ENCODE measurements at regions of chr19 and their contacts with region 1.

Region 1: DNA sequence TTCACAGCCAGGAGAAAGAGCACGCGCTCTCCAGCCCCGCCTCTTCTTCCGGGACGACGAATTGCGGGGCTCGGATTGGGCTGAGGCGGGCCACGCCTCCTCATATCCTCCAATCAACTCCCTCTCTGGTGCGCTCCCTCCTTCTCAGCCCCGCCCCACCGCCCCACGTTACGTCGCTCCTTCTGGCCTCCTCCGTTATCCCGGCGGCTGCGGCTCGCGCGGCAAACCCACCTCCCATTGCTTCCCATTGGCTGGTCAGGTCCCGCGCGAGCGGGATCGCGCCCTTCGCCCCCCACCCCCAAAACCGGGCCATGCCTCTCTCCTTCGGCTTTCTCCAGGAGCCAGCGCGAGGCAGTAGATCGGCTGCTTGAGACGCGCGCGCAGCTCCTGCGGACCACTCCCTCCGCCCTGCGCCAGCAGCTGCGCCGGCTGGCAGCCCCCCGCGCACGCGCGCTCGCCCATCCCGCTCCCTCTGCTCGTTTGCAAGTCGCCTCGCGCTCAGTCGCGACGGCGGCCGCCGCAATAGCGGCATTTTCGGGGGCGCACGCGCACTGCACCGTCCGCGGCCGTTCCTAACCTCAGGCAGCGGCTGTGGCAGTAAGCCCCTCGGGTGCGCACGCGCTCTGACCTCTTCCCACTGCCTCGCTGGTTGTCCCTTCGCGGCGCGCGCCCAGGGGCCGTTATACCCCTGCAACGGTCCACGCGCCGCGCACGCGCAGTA is 512 bp upstream of the ARHGAP35 start:
- DNase-seq: peak; percentile 97
- H3K4me3 Mint-ChIP-seq: peak overlapping the region; percentile 92
- H3K27ac Mint-ChIP-seq: peak overlapping the region; percentile 97
- H3K4me1 Mint-ChIP-seq: peaks cover 25% of the 10 kb centered on the region
- H3K27me3 Mint-ChIP-seq: no peaks in the 10 kb centered on the region

Region 2: GRCh38 chr19:46392243-46392801 is 468.0 kb before region 1 on chr19:
- intact Hi-C with region 1: loop called (anchors 1 kb)
- DNase-seq: no peak
- H3K4me3 Mint-ChIP-seq: no peak overlapping the region
- H3K27ac Mint-ChIP-seq: no peak overlapping the region
- H3K4me1 Mint-ChIP-seq: peaks cover 10% of the 10 kb centered on the region
- H3K27me3 Mint-ChIP-seq: no peaks in the 10 kb centered on the region

Region 3: GRCh38 chr19:46919324-46919723 is 59.0 kb after region 1 on chr19:
- intact Hi-C with region 1: loop called (anchors 2 kb)
- DNase-seq: no peak
- H3K4me3 Mint-ChIP-seq: no peak overlapping the region
- H3K27ac Mint-ChIP-seq: no peak overlapping the region
- H3K4me1 Mint-ChIP-seq: peaks cover 37% of the 10 kb centered on the region
- H3K27me3 Mint-ChIP-seq: no peaks in the 10 kb centered on the region

Region 4: DNA sequence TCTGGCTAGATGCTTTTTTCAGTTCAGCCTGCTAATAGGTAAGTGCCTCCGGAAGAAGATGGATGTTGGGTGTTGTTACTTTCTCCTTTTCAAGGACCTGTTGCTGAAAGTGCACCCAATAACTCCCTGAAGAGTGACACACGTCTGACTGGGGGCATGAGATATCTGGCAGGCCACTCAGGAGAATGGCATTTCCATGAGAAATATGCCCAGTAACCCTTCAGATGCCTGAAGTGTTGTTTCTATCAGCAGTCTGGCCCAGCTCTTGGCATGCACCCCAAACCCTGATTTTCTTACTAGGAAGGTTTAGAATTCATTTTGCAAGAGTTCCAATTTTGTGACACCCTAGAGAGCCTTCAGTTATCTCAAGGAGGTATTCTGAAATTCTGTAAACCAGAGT is 72.1 kb after region 1 on chr19:
- intact Hi-C with region 1: no loop called
- DNase-seq: no peak
- H3K4me3 Mint-ChIP-seq: no peak overlapping the region
- H3K27ac Mint-ChIP-seq: no peak overlapping the region
- H3K4me1 Mint-ChIP-seq: peaks cover 41% of the 10 kb centered on the region
- H3K27me3 Mint-ChIP-seq: no peaks in the 10 kb centered on the region

Region 5: GRCh38 chr19:46990991-46991676 is 130.8 kb after region 1 on chr19:
- intact Hi-C with region 1: loop called (anchors 1 kb)
- DNase-seq: peak; percentile 51
- H3K4me3 Mint-ChIP-seq: no peak overlapping the region
- H3K27ac Mint-ChIP-seq: no peak overlapping the region
- H3K4me1 Mint-ChIP-seq: peaks cover 19% of the 10 kb centered on the region
- H3K27me3 Mint-ChIP-seq: no peaks in the 10 kb centered on the region

Region 6: DNA sequence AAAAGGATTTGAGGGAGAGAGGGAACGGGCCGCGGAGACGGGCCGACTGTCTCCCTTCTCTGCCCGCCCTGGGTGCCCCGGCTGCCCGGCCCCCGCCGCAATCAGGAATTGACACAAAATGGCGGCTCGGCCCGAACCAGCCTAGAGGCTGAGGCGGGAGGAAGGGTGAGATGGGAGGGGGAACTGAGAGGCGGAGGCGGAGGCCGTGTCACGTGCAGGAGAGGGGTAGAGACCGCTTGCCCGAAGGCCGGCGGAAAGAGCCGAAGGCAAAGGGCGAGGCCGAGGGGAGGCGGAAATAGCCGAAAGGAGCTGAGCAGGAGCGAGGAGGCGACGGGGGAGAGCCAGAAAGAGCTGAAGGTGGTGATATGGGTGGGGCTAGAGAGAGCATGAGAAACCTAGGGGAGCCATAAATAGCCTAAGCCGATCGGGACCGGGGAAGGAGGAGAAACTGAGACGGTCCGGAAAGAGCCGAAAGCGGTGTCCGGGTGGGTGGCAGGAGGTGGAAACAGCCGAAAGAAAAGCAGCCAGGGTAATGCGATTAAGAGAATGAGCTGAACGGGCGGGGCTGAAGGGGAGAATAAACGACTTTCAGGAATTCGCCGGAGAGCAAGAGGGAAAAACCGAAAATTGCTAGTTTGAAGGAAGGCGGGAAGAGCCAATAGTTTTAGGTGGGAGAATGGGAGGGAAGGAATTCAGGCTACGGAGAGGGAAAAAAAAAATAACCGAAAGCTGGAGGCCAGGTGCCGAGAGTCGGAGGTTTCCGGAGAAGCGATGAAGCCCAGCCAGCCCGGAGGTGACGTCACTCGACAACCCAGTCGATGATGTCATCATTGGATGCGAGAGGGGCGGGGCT is 252.9 kb after region 1 on chr19 and contains the start of gene ZC3H4:
- intact Hi-C with region 1: loop called (anchors 2 kb)
- DNase-seq: peak; percentile 100
- H3K4me3 Mint-ChIP-seq: peak within 1 kb of the TSS; percentile 92
- H3K27ac Mint-ChIP-seq: peak within 1 kb of the TSS; percentile 99
- H3K4me1 Mint-ChIP-seq: peaks cover 33% of the 10 kb centered on the region
- H3K27me3 Mint-ChIP-seq: no peaks in the 10 kb centered on the region
- total RNA-seq, gene ZC3H4: 111 and 114 TPM in 2 replicates

Region 7: GRCh38 chr19:47514869-47515588 is 654.7 kb after region 1 on chr19 and contains the start of gene NAPA:
- intact Hi-C with region 1: loop called (anchors 1 kb)
- DNase-seq: peak; percentile 100
- H3K4me3 Mint-ChIP-seq: peak within 1 kb of the TSS; percentile 95
- H3K27ac Mint-ChIP-seq: peak within 1 kb of the TSS; percentile 92
- H3K4me1 Mint-ChIP-seq: peaks cover 63% of the 10 kb centered on the region
- H3K27me3 Mint-ChIP-seq: peaks cover 4% of the 10 kb centered on the region
- total RNA-seq, gene NAPA: 66.4 and 68.7 TPM in 2 replicates

Measured in activated T-helper 1 cell treated with anti-CD3 and anti-CD28 coated beads, Interleukin-12 subunit alpha, Interleukin-12 subunit beta, Interleukin-2, Interleukin-4 antibody, amounts not matched to agents 30 ng/mL and 10 ng/mL and 1 ng/mL, durations not matched to agents 14 hours and 24 hours and 36 hours (primary cell).